ENCODE measurements at regions of chr19 and their contacts with region 1.

Region 1: GRCh38 chr19:40777937-40778705 is at the start of gene RAB4B:
- DNase-seq: peak; percentile 100
- ATAC-seq: peak; percentile 81
- H3K4me3 Mint-ChIP-seq: peak within 1 kb of the TSS; percentile 87
- H3K27ac Mint-ChIP-seq: peak within 1 kb of the TSS; percentile 99
- H3K4me1 Mint-ChIP-seq: peaks cover 33% of the 10 kb centered on the region
- H3K27me3 Mint-ChIP-seq: no peaks in the 10 kb centered on the region
- total RNA-seq, gene RAB4B: 36.2 to 56.7 TPM

Region 2: GRCh38 chr19:40609561-40610395 is 168.3 kb before region 1 on chr19:
- CTCF ChIA-PET with region 1: no interaction called
- DNase-seq: peak; percentile 94
- ATAC-seq: peak; percentile 64
- H3K4me3 Mint-ChIP-seq: peak overlapping the region; percentile 76
- H3K27ac Mint-ChIP-seq: peak overlapping the region; percentile 90
- H3K4me1 Mint-ChIP-seq: peaks cover 49% of the 10 kb centered on the region
- H3K27me3 Mint-ChIP-seq: no peaks in the 10 kb centered on the region

Region 3: GRCh38 chr19:40721936-40722661 is 56.0 kb before region 1 on chr19:
- CTCF ChIA-PET with region 1: no interaction called
- DNase-seq: no peak
- ATAC-seq: no peak
- H3K4me3 Mint-ChIP-seq: no peak overlapping the region
- H3K27ac Mint-ChIP-seq: no peak overlapping the region
- H3K4me1 Mint-ChIP-seq: peaks cover 49% of the 10 kb centered on the region
- H3K27me3 Mint-ChIP-seq: no peaks in the 10 kb centered on the region

Region 4: DNA sequence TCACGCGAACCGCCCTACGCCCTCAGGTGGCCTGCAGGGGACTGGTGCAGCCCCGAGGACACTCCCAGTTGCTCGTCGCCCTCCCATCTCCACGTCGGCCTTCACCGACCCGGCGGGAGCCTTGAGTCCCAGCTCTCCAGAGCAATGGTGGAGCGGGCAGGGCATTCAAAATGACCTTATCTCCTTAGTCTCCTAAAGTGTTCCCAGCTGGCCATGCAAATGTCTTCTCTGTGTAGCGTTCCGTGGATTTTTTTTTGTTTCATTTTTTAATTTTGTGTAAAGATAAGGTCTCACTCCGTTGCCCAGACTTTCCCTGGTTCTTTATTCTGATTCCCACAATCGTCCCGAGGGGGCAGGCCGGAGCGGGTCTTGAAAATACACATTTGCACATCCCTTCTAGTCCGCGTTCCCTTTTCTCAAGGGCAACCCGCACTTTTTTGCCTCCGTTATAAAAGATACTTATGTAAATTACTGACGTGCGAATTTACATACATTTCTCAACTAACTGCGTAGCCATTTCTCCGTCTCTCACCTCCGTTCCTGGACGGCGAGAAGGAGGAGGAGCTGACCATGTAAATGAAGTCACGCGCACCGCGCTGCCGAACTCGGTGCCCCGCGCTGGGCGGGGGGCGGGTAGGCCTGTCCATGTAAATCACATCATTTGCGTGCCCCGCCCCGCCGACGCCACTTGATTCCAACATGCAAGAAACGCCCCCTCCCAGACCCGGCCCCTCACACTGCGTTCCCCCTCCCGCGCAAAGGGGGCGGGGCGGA is 20.3 kb after region 1 on chr19:
- CTCF ChIA-PET with region 1: interaction called, 42 read pairs
- DNase-seq: peak; percentile 100
- ATAC-seq: peak; percentile 87
- H3K4me3 Mint-ChIP-seq: peak overlapping the region; percentile 95
- H3K27ac Mint-ChIP-seq: peak overlapping the region; percentile 98
- H3K4me1 Mint-ChIP-seq: peaks cover 50% of the 10 kb centered on the region
- H3K27me3 Mint-ChIP-seq: no peaks in the 10 kb centered on the region

Region 5: GRCh38 chr19:40862785-40863184 is 84.7 kb after region 1 on chr19:
- CTCF ChIA-PET with region 1: no interaction called
- DNase-seq: no peak
- ATAC-seq: no peak
- H3K4me3 Mint-ChIP-seq: no peak overlapping the region
- H3K27ac Mint-ChIP-seq: no peak overlapping the region
- H3K4me1 Mint-ChIP-seq: no peaks in the 10 kb centered on the region
- H3K27me3 Mint-ChIP-seq: peaks cover 25% of the 10 kb centered on the region

Region 6: DNA sequence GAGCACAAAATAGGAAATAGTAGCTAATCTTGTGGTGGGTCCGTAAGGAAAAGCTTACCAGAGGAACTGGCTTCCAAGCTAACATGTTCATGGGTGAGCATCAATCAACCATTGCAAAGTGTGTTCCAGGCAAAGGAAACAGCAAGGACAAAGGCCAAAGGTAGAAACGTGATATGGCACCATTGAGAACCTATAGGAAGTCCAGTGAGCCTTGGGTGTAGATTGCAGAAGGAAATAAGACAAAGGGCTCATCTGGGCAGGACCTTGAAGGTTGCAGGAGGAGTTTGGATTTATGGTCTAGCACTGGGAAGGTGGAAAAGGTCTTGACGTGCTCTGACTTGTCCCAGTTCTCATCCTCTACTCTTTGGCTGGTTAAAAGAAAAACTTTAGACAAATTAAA is 235.2 kb after region 1 on chr19:
- CTCF ChIA-PET with region 1: no interaction called
- DNase-seq: no peak
- ATAC-seq: no peak
- H3K4me3 Mint-ChIP-seq: no peak overlapping the region
- H3K27ac Mint-ChIP-seq: no peak overlapping the region
- H3K4me1 Mint-ChIP-seq: peaks cover 3% of the 10 kb centered on the region
- H3K27me3 Mint-ChIP-seq: peaks cover 43% of the 10 kb centered on the region

Measured in activated CD8-positive, alpha-beta memory T cell treated with anti-CD3 and anti-CD28 coated beads, Interleukin-2, amount 10 ng/mL, durations not matched to agents 7 days and 5 days (primary cell).